Panc1 (cell line): ENCODE measurements at regions of chr2 and their contacts with region 1.

Region 1: GRCh38 chr2:124018890-124019289 is 6.2 kb upstream of the CNTNAP5 start:
- DNase-seq: no peak
- ATAC-seq: no peak
- H3K4me3 ChIP-seq: no peak overlapping the region
- H3K27ac ChIP-seq: no peak overlapping the region
- H3K4me1 ChIP-seq: no peaks in the 10 kb centered on the region
- H3K27me3 ChIP-seq: no peaks in the 10 kb centered on the region
- CTCF ChIP-seq: no peak; the same call in 1 of the 2 replicates

Region 2: DNA sequence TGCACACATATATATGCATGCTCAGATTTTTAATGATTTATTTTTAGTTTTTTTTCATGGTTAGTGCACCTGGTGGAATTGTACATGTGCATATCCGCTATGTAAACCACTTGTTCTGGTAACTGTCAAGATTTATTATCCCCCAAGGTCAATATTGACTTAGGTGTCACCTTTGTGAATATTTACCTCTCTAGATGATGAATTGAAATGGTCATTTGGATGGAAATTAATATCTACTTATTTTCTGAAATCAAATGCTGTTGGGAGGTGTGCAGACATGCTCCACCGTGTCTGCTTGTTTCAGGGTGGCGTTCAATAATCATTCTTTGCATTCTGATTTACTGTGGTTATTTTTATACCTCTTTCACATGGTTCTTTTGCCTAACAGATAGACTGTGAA is 21.0 kb after region 1 on chr2:
- CTCF ChIA-PET with region 1: no interaction called
- POLR2A ChIA-PET with region 1: no interaction called
- in situ Hi-C with region 1: no loop called
- intact Hi-C with region 1: loop called (anchors 2 kb)
- DNase-seq: no peak
- ATAC-seq: no peak
- H3K4me3 ChIP-seq: no peak overlapping the region
- H3K27ac ChIP-seq: no peak overlapping the region
- H3K4me1 ChIP-seq: no peaks in the 10 kb centered on the region
- H3K27me3 ChIP-seq: no peaks in the 10 kb centered on the region
- CTCF ChIP-seq: no peak